Aorta (tissue), 5 donors: ENCODE measurements at regions of chr10 and their contacts with region 1.

Region 1: GRCh38 chr10:68406815-68407548 is at the start of gene RUFY2:
- DNase-seq: peak; percentile 86 to 93
- ATAC-seq: peak; percentile 98
- H3K4me3 ChIP-seq: peak within 1 kb of the TSS; percentile 96
- H3K27ac ChIP-seq: peak within 1 kb of the TSS; percentile 53 to 87
- H3K4me1 ChIP-seq: no peaks in the 10 kb centered on the region
- H3K27me3 ChIP-seq: no peaks in the 10 kb centered on the region
- total RNA-seq, gene RUFY2: 31.6 to 44.6 TPM

Region 2: GRCh38 chr10:68284062-68285001 is 122.7 kb before region 1 on chr10:
- intact Hi-C with region 1: no loop called
- DNase-seq: no peak
- ATAC-seq: no peak
- H3K4me3 ChIP-seq: no peak overlapping the region
- H3K27ac ChIP-seq: no peak overlapping the region
- H3K4me1 ChIP-seq: no peaks in the 10 kb centered on the region
- H3K27me3 ChIP-seq: no peaks in the 10 kb centered on the region

Region 3: GRCh38 chr10:68333058-68333395 is 74.0 kb before region 1 on chr10:
- intact Hi-C with region 1: no loop called
- DNase-seq: no peak
- ATAC-seq: no peak
- H3K4me3 ChIP-seq: peak overlapping the region; percentile 60 to 94
- H3K27ac ChIP-seq: peak overlapping the region; percentile 84 to 95
- H3K4me1 ChIP-seq: peaks cover 0 to 11% of the 10 kb centered on the region in 2 donors
- H3K27me3 ChIP-seq: no peaks in the 10 kb centered on the region

Region 4: DNA sequence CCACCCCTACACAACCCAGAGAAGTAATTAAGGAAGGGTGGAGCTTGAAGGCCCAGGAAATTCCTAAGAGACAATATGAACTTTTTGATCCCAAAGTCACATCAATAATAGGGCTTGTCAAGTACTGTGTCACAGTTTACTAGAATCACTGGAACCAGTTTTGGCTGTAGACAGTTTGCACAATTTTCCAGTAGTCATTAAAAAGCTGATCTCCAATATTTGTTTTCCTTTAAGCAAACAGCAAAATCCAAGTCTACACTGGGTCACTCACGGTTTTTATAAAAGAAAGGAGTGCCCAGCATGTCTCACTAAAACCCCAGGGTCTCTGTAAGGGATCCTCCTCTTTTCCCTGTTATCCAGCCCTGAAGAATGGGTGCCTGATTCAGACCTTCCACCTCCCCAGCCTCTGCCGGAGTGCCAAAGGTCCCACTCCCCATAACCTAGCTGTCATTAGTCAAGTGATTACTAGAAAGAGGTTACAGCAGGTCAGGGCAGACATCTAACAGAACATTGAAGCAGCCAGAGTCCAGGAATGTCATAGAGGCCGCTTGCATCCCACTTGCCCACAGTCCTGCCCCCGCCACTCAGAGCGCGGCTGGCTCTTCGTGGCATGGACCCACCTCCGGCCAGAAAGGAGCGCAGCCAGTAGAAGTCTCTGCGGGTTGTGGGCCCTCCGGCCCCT is 119.8 kb after region 1 on chr10:
- intact Hi-C with region 1: loop called in 1 of 2 experiments (anchors 2 kb)
- DNase-seq: no peak
- ATAC-seq: no peak
- H3K4me3 ChIP-seq: peak overlapping the region; percentile 57 to 64
- H3K27ac ChIP-seq: peak overlapping the region; percentile 3 to 76
- H3K4me1 ChIP-seq: no peaks in the 10 kb centered on the region
- H3K27me3 ChIP-seq: no peaks in the 10 kb centered on the region